OCI-LY7 (cell line): ENCODE measurements at regions of chr3 and their contacts with region 1.

Region 1: GRCh38 chr3:187150599-187150998 is 11.3 kb upstream of the RPL39L start:
- DNase-seq: peak; percentile 64
- H3K4me3 ChIP-seq: no peak overlapping the region
- H3K27ac ChIP-seq: no peak overlapping the region
- H3K4me1 ChIP-seq: no peaks in the 10 kb centered on the region
- CTCF ChIP-seq: peak; percentile 76

Region 2: GRCh38 chr3:186281176-186281575 is 869.4 kb before region 1 on chr3:
- CTCF ChIA-PET with region 1: no interaction called
- POLR2A ChIA-PET with region 1: no interaction called
- intact Hi-C with region 1: no loop called
- DNase-seq: no peak
- H3K4me3 ChIP-seq: no peak overlapping the region
- H3K27ac ChIP-seq: no peak overlapping the region
- H3K4me1 ChIP-seq: peaks cover 3% of the 10 kb centered on the region
- CTCF ChIP-seq: no peak

Region 3: DNA sequence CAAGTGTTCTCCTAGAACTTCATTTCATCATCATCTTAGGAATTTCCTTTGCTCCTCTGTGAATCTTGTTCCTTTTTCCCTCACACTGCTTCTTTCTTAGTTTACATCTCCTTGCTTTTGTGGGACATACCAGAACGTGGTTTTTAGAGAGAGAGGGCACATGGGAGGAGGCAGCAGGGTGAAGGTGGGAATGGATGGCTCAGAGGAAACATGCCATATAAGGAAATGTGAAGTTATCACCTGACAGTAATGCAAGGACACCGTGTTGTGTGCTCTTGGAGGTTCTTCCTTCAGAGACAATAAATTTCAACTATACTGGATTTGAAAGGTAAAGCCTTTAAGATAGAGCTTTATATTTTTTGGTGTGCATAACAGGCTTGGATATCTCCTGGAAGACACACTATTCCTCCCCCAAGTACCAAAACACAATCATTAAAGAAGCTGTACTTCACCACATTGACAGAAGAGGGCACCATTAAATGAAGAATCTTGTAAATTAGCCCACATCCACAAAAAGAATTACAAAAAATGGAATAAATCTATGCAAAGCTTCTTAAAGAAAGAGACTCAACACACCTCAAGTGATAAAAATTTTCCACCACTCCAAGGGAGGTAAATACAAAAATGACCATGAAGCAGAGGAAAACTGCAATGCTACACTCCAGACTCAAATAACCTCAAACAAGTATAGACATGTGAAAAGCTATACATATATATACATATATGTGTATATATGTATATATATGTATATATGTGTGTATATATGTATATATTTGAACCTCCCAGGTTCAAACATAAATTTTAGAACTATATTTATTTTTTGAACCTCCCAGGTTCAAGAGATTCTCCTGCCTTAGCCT is 37.4 kb before region 1 on chr3:
- CTCF ChIA-PET with region 1: no interaction called
- POLR2A ChIA-PET with region 1: interaction called, 4 read pairs
- intact Hi-C with region 1: loop called (anchors 1 kb)
- DNase-seq: peak; percentile 55
- H3K4me3 ChIP-seq: no peak overlapping the region
- H3K27ac ChIP-seq: no peak overlapping the region
- H3K4me1 ChIP-seq: peaks cover 14% of the 10 kb centered on the region
- CTCF ChIP-seq: peak; percentile 91

Region 4: GRCh38 chr3:187255314-187255713 is 104.7 kb after region 1 on chr3:
- CTCF ChIA-PET with region 1: no interaction called
- POLR2A ChIA-PET with region 1: no interaction called
- intact Hi-C with region 1: no loop called
- DNase-seq: no peak
- H3K4me3 ChIP-seq: no peak overlapping the region
- H3K27ac ChIP-seq: no peak overlapping the region
- H3K4me1 ChIP-seq: no peaks in the 10 kb centered on the region
- CTCF ChIP-seq: no peak